HEK293 (cell line): ENCODE measurements at regions of chr12 and their contacts with region 1.

Region 1: DNA sequence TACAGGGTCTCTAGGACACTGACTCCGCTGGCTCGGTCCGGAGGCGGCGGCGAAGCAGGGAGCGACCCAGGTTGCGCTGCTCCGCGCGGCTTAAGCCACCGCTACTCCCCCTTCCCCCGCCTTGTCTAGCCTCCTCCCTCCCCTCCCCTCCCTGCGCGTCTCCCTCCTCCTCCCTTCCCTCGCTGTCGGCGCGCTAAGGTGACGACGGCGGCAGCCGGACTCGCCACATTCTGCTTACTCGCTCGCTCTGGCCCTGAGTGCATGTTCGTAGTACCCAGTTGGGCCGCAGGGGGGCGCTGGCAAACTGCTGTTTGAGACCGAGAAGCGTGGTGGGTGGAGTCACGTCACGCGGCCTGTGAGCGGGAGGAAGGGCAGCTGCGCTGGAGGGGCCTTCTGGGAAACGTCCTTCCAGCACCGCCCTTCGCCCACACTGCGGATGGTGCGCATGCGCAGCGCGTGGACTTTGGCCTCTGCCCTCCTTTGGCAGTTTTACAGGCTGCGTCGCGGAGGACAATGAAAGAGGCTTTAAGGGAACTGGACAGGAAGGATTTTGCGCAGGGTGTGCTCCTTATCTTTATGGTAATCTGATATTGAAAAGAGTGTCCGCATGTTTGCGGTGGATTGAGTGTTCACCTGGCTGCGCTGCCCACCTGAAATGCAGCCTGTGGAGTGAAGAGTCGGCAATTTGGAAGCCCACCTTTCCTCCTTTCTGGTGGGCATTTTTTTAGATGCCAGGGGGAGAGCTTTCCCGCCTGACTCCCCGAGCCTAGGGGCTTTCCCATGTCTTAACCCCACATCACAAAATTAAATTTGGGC is at the start of gene SCAF11:
- H3K4me3 ChIP-seq: peak within 1 kb of the TSS; percentile 90
- H3K27ac ChIP-seq: peak within 1 kb of the TSS; percentile 97
- H3K4me1 ChIP-seq: peaks cover 7% of the 10 kb centered on the region; the same call in 1 of the 2 replicates
- CTCF ChIP-seq: peak; percentile 100

Region 2: DNA sequence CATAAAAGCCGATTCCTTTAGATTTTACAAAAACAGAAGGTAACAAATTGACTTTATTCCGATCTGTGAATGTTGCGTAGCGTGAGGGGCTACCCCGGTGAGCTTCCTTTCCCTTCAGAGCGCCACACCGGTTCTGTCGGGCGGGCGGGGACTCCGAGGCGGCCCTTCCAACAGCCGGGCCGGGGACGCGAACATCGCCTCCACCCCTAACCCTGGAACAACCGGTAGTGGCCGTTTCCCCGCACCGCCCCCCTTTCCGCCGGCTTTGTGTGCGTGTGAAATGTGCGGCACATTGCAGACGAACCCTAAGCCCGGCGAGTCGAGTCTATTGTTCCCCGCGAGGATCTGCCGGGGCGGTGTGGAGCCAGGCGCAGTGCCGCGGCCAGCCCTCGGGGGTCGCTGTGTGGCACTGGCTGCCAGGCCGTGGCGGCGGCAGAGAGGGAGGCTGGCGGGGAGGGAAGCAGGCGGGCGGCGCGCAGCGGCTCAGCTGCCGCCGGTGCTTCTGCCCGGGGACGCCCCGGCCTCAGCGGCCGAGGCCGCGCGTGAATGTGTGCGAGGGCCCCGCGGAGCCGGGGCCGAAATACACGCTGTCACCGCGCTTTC is 261.9 kb before region 1 on chr12:
- CTCF ChIA-PET with region 1: no interaction called
- POLR2A ChIA-PET with region 1: interaction called, 11 read pairs
- H3K4me3 ChIP-seq: peak overlapping the region; percentile 82
- H3K27ac ChIP-seq: peak overlapping the region; percentile 98
- H3K4me1 ChIP-seq: peaks cover 4% of the 10 kb centered on the region; the same call in 1 of the 2 replicates
- CTCF ChIP-seq: peak; percentile 98

Region 3: DNA sequence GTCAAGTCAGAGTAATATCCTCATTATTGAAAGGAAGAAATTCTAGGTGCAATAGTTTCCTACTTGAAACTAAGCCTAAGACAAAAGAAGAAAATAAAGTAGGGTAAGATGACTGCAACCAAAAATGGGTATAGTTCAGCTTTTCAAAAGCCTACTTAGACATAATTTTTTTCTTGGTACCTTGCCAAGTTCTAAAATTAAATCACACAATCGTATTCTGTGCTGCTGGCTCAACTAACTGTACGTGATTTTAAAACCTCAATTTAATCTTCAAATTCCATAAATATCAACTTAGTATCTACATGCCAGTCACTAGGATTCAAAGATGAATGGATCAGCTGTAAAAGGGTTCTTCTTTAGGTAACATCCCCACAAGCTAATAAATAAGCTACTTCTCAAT is 57.2 kb before region 1 on chr12:
- CTCF ChIA-PET with region 1: no interaction called
- POLR2A ChIA-PET with region 1: no interaction called
- H3K4me3 ChIP-seq: no peak overlapping the region
- H3K27ac ChIP-seq: no peak overlapping the region
- H3K4me1 ChIP-seq: peaks cover 5% of the 10 kb centered on the region; the same call in 1 of the 2 replicates
- CTCF ChIP-seq: no peak